H1 (cell line): ENCODE measurements at regions of chr6 and their contacts with region 1.

Region 1: GRCh38 chr6:69914015-69914485 is 47.7 kb downstream of the COL19A1 start:
- DNase-seq: no peak
- H3K4me3 ChIP-seq: no peak overlapping the region
- H3K27ac ChIP-seq: no peak overlapping the region
- H3K4me1 ChIP-seq: no peaks in the 10 kb centered on the region
- H3K27me3 ChIP-seq: no peaks in the 10 kb centered on the region
- CTCF ChIP-seq: peak in 2 of 3 experiments; percentile 7 to 50; a peak in 2 of 4 replicates
- EP300 ChIP-seq: no peak
- POLR2A ChIP-seq: no peak
- RAD21 ChIP-seq: peak; percentile 17 to 34; a peak in 2 of 4 replicates

Region 2: DNA sequence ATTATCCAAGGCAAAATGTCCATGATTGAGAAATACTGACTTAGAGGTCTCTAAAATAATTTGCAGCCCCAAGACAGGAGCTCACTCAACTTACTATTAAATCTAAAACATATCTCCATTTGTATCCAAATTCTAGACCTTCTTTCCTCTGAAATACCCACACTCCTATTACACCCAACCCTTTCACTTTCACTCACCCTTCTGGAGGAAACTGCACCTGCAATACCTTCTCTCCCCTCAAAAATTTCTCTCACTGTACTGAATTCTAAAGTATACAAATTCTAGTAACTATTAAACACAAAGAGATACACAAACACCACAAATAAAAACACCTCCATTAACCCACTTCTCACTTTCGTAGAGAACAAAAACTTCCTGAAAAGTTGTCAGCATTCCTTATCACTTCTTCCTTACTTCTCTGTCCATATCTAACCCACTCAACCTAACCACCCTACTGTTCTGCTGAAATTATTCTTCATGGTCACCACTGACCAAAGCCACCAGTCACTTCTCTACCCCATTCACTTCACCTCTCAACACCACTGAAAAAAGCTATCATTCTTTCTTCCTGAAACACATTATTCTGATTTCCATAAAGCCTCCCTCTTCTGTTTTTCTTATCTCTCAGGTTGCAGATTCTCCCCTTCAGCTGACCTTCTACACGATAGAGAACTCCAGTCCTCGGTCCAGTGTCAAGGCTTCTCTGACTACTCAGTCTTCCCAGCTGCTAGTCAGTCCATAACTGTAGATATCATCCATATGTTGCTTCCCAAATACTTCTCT is 129.3 kb before region 1 on chr6:
- CTCF ChIA-PET with region 1: no interaction called
- POLR2A ChIA-PET with region 1: no interaction called
- DNase-seq: no peak
- H3K4me3 ChIP-seq: no peak overlapping the region
- H3K27ac ChIP-seq: no peak overlapping the region
- H3K4me1 ChIP-seq: no peaks in the 10 kb centered on the region
- H3K27me3 ChIP-seq: no peaks in the 10 kb centered on the region
- CTCF ChIP-seq: no peak
- EP300 ChIP-seq: no peak
- POLR2A ChIP-seq: no peak
- RAD21 ChIP-seq: no peak

Region 3: GRCh38 chr6:69894578-69895347 is 19.3 kb before region 1 on chr6:
- CTCF ChIA-PET with region 1: interaction called, 10 read pairs
- POLR2A ChIA-PET with region 1: interaction called, 3 read pairs
- DNase-seq: no peak
- H3K4me3 ChIP-seq: no peak overlapping the region
- H3K27ac ChIP-seq: no peak overlapping the region
- H3K4me1 ChIP-seq: no peaks in the 10 kb centered on the region
- H3K27me3 ChIP-seq: no peaks in the 10 kb centered on the region
- CTCF ChIP-seq: no peak
- EP300 ChIP-seq: no peak
- POLR2A ChIP-seq: no peak
- RAD21 ChIP-seq: no peak